Sciatic nerve (tissue), 2 donors: ENCODE measurements at regions of chr2 and their contacts with region 1.

Region 1: GRCh38 chr2:26581991-26582842 is 58.9 kb downstream of the CIB4 start:
- DNase-seq: peak; percentile 30
- ATAC-seq: no peak

Region 2: DNA sequence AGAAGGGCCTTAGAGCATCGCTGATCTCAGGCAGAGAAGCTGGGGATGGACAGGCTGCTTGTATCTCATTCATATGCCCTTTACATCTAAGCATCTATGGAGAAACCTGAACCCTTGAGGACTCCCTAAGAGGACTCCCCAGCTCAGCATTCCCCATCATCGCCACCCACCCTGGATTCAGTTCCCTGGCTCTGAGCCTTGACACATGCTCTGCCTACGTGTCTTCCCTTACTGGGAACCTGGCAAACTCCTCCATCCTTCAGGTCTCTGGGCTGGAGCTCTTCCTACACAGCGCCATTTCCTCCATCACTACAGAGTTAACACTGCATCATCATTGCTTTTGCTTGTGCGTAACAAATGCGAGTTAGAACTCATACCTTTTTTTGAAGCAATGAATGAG is 73.1 kb before region 1 on chr2:
- intact Hi-C with region 1: loop called (anchors 2 kb)
- DNase-seq: no peak
- ATAC-seq: no peak

Region 3: GRCh38 chr2:27807476-27807875 is 1225.3 kb after region 1 on chr2:
- intact Hi-C with region 1: no loop called
- DNase-seq: no peak
- ATAC-seq: peak; percentile 66